ENCODE measurements at regions of chr14 and their contacts with region 1.

Region 1: DNA sequence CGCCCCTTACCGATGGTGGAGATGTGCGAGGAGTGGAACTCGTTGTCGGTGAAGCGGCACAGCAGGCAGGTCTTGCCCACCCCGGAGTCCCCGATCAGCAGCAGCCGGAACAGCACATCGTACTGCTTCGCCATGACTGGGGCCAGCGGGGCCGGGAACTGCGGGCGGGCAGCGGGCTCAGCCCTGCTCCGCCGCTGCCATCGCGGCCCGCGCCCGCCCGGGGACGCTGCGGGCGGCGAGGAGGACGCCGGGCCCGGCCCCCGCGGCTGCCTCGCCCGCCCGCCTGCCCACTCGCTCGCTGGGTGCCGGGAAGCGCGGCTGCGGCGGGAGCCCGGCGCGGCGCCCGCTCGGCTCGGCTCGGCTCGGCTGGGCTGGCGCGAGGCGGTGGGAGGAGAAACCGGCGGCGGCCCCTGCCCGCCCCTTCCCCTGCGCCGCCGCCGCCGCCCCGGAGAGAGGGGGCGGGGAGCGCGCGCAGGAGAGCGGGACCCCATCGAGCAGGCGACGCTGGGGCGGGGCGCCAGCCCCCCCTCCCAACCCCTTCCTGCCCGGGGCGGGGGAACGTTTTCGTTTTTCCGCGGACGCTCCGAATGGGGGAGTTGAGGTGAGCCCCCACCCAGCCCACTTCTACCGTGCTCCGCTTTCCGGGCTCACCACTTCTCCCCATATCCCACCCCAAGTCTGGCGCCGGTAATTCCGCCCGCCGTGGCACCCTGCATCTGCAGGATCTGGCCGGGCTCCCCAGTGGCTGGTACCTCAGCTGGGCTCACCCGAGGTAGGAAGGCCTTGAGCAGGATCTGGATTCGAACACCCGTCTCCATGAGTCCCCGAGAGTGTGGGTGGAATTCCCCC is at the start of gene RAB15:
- DNase-seq: no peak
- total RNA-seq, gene RAB15: 60.8 TPM

Region 2: GRCh38 chr14:64817631-64818030 is 154.5 kb before region 1 on chr14:
- intact Hi-C with region 1: no loop called
- DNase-seq: no peak

Region 3: DNA sequence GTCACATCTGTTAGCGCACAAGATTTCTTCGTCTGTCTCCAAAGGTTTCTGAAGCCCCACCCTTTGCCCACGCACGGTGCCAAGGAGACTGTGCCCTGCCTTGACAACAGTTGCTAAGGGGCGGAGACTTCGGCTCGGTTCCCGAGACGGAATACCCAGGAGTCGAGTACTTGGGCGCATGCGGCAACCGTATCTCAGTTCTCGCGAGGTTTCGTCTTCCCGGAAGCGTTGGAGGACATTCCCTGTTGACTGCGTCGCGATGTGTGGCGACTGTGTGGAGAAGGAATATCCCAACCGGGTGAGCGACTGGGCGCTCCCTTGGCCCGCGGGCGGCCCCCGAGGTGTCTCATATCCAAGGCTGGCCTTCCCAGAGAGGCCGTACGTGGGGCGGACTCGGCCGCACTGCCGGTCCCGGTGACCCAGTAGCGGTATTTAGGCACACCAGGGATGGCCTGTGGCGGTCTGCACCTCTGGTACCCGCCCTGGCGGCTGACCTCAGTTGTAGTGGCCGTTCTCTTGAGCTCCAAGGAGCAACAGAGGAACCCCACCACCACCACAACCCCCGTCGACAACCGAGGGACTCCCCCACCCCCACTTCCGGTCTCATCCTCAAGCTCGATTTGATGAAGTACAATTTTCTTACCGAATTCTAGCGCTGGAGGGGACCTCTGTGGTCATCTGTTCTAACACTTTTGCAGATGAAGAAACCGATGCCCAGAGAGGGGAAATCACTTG is 57.8 kb before region 1 on chr14 and contains the start of gene CHURC1:
- intact Hi-C with region 1: loop called (anchors 5 kb)
- DNase-seq: peak; percentile 99
- total RNA-seq, gene CHURC1: 82.6 TPM

Region 4: DNA sequence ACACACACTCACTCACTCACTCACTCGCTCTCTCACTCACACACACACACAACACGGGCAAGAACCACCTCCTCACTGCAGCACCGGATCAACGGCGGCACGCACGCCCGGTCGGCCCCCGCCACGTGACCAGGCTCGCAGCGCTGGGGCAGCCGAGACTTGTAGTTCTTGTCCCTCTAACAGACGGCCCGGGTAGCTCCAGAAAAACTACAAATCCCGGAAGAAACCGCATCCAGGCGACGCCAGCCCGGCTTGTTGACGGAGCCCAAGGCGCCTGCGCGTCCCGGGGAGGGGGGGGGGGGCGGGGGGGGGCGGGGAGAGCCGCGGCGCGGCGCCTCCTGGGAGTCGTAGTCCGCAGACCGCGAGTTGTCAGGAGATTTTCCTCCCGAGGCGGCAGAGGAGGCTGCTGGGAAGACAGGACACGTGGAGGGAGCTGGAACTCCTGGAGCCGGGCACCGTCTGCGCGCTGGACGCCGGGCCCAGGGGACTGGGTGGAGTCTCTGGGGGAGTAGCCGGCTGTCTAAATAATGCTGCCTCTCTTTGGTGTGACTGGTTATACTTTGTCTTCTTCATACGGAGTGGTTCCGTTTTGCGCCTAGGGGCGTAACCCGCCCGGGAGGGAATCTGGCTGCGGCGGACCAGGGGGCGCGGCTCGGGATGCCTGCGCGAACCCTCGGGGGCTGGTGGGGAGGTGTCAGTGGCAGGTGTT is 130.4 kb after region 1 on chr14 and contains the start of gene MAX:
- intact Hi-C with region 1: no loop called
- DNase-seq: peak; percentile 100
- total RNA-seq, gene MAX: 80.8 TPM

Measured in cardiac septum (tissue), 1 donor.